CD4-positive, alpha-beta memory T cell (primary cell): ENCODE measurements at regions of chr20 and their contacts with region 1.

Region 1: GRCh38 chr20:52312132-52312729 is 120.7 kb upstream of the ZFP64 start:
- DNase-seq: peak; percentile 44 to 69 (median 64)
- H3K4me3 ChIP-seq: no peak overlapping the region
- H3K4me3 Mint-ChIP-seq: no peak overlapping the region
- H3K27ac ChIP-seq: no peak overlapping the region
- H3K27ac Mint-ChIP-seq: no peak overlapping the region
- H3K4me1 ChIP-seq: peaks cover 2% of the 10 kb centered on the region
- H3K4me1 Mint-ChIP-seq: peaks cover 5 to 26% (median 12%) of the 10 kb centered on the region in 4 donors
- H3K27me3 ChIP-seq: no peaks in the 10 kb centered on the region
- H3K27me3 Mint-ChIP-seq: no peaks in the 10 kb centered on the region

Region 2: DNA sequence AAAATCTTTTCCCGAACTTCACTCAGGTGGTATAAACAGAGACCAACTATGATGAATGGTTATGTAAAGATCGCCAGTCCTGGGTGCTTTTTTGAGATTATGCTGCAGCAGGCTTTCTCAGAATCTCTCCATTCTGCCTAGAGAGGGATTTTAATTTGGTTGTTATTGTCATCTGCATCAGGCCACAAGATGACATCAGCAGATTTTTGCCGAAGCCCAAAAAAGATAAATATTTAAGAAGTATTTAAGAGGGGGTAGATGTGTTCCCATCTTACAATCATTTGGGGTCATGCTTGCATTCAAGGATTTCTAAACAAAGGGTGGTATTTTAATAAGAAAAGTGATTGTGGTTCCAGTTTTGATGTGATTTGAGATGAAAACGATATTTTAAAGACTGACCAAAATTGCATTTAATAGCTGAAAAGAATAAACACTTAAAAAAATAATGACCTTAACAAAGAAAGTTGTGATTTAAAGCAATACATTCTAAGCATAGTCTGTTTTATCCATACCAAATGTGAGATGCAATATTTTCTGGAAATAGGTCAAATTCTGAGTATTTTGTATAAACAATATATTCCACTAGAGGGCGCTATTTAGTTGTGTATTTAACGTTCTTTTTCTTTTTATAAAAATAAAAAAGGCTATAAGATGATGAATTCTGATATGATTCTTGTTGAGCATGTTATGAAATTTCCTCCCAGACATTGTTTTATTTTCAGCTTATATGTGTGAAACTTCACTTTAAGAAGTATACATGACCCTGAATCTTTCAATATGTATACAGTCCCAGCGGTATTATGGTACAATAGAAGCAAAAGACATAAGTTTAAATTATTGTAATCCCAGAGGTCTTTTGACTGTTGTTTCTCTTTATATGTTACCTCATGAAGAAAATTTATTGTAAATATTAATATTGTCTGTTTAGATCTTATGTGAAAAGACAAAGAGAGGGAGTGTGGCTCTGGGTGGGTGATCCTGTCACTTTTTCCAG is 69.7 kb before region 1 on chr20:
- CTCF ChIA-PET with region 1: interaction called, 4 read pairs
- POLR2A ChIA-PET with region 1: no interaction called
- intact Hi-C with region 1: loop called (anchors 5 kb)
- DNase-seq: peak in 4 of 5 donors; percentile 29 to 39 (median 36)
- H3K4me3 ChIP-seq: no peak overlapping the region
- H3K4me3 Mint-ChIP-seq: no peak overlapping the region
- H3K27ac ChIP-seq: no peak overlapping the region
- H3K27ac Mint-ChIP-seq: no peak overlapping the region
- H3K4me1 ChIP-seq: no peaks in the 10 kb centered on the region
- H3K4me1 Mint-ChIP-seq: no peaks in the 10 kb centered on the region
- H3K27me3 ChIP-seq: no peaks in the 10 kb centered on the region
- H3K27me3 Mint-ChIP-seq: peaks cover 0 to 2% of the 10 kb centered on the region in 2 donors

Region 3: DNA sequence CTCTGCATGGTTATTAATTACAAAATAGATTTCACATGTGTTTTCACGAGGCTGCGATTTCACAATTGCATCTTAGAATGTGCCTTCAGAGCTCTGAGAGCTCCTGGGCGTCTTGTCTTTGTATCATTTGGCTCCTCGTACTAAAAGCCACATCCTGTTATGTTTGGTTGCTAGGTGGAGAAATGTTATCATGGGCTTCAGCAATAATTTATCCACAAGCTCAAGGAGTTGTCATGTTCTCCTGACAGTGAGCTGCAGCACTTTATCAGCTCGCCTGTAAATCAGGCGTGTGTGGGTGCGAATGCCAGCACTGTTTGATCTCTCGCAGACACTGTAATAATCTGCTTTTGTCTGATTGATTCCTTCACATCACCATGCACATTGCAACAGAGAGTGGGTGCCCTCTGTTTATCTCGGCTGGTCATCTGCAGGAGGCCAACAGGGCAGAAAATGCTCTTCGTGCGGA is 98.0 kb after region 1 on chr20:
- CTCF ChIA-PET with region 1: interaction called, 11 read pairs
- POLR2A ChIA-PET with region 1: interaction called, 8 read pairs
- intact Hi-C with region 1: loop called (anchors 1 kb)
- DNase-seq: peak; percentile 82 to 91 (median 86)
- H3K4me3 ChIP-seq: peak overlapping the region; percentile 1 to 37
- H3K4me3 Mint-ChIP-seq: peak overlapping the region; percentile 52 to 85 (median 80)
- H3K27ac ChIP-seq: peak overlapping the region; percentile 75
- H3K27ac Mint-ChIP-seq: peak overlapping the region; percentile 95 to 100 (median 99)
- H3K4me1 ChIP-seq: peaks cover 79% of the 10 kb centered on the region
- H3K4me1 Mint-ChIP-seq: peaks cover 55 to 88% (median 70%) of the 10 kb centered on the region in 4 donors
- H3K27me3 ChIP-seq: no peaks in the 10 kb centered on the region
- H3K27me3 Mint-ChIP-seq: no peaks in the 10 kb centered on the region

Region 4: DNA sequence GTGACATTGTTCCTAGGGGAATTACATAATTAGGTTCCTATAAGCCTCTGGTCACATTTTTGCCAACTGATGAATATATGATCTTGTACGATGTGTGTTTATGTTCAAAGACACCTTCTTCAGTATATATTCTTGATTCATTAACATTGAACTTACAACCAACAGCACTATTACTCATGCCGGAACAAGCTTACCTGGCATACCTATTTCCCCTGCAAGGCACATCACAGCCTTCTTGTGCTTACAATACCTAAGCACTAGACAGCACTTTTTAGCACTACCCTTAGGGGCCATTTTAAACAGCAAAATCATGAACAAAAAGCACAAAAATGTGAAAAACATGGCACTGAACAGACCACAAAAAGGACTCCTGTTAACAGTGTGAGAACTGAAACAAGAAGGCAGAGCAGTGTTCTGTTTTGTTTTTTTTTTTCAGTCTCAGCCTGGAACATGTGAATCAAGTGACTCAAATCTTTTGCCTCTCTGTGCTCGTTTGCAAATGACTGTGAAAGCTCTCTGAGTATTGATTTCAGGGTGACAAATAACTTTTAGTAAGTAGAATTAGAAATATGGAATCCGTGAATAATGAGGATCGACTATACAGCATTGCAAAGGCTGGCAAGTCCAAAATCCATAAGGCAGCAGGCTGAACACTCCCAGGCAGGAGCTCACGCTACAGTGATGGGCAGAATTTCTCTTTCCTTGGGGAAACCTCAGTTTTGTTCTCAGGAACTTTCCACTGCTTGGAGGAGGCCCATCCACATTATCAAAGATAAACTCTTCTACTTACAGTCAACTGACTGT is 557.7 kb after region 1 on chr20:
- CTCF ChIA-PET with region 1: no interaction called
- POLR2A ChIA-PET with region 1: no interaction called
- intact Hi-C with region 1: no loop called
- DNase-seq: no peak
- H3K4me3 ChIP-seq: no peak overlapping the region
- H3K4me3 Mint-ChIP-seq: no peak overlapping the region
- H3K27ac ChIP-seq: no peak overlapping the region
- H3K27ac Mint-ChIP-seq: no peak overlapping the region
- H3K4me1 ChIP-seq: no peaks in the 10 kb centered on the region
- H3K4me1 Mint-ChIP-seq: no peaks in the 10 kb centered on the region
- H3K27me3 ChIP-seq: no peaks in the 10 kb centered on the region
- H3K27me3 Mint-ChIP-seq: peaks cover 0 to 5% of the 10 kb centered on the region in 2 donors

Region 5: GRCh38 chr20:53001498-53002301 is 689.5 kb after region 1 on chr20:
- CTCF ChIA-PET with region 1: interaction called, 14 read pairs
- POLR2A ChIA-PET with region 1: interaction called, 4 read pairs
- intact Hi-C with region 1: no loop called
- DNase-seq: peak in 4 of 5 donors; percentile 30 to 52 (median 38)
- H3K4me3 ChIP-seq: peak overlapping the region; percentile 30 to 39
- H3K4me3 Mint-ChIP-seq: peak overlapping the region; percentile 74 to 92 (median 84)
- H3K27ac ChIP-seq: peak overlapping the region; percentile 41
- H3K27ac Mint-ChIP-seq: peak overlapping the region; percentile 87 to 98 (median 94)
- H3K4me1 ChIP-seq: peaks cover 42% of the 10 kb centered on the region
- H3K4me1 Mint-ChIP-seq: peaks cover 24 to 50% (median 44%) of the 10 kb centered on the region in 4 donors
- H3K27me3 ChIP-seq: no peaks in the 10 kb centered on the region
- H3K27me3 Mint-ChIP-seq: peaks cover 0 to 5% of the 10 kb centered on the region in 2 donors

Region 6: DNA sequence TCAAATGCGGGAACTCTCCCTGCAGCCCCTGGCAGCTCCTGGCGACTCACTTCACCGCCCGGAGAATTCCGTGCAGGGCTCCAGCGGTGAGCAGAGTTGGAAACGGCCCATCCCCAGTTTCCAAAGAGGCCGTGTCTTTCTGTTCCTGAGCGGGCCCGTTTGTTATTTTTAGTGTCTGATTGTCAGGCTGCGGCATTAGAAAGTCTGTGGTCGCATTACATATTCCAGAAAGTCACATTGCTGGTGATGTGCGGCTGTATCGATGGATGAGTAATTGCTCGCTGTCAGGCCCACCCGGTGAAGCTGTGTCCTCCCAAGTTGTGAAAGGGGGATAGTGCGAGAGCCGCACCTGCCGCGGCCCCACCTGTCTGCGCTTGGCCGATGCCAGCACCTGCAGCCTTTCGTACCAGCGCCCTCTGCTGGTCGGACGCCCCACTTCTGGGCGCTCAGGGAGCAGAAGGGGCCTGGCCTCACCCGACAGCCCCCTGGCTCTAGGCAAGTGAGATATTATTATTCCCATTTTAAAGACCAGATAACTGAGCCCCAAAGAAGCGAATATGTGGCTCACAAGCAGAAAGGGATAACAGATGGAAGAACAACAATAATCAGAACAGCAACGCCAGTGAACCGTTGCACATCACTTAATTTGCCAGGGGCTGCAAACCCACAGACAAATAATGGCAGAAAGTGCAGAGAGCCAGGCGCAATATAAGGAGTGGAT is 904.8 kb after region 1 on chr20:
- CTCF ChIA-PET with region 1: interaction called, 115 read pairs
- POLR2A ChIA-PET with region 1: interaction called, 7 read pairs
- intact Hi-C with region 1: loop called (anchors 1 kb)
- DNase-seq: peak; percentile 65 to 76 (median 69)
- H3K4me3 ChIP-seq: peak overlapping the region in 1 of 2 donors; percentile 15
- H3K4me3 Mint-ChIP-seq: peak overlapping the region; percentile 67 to 83 (median 74)
- H3K27ac ChIP-seq: no peak overlapping the region
- H3K27ac Mint-ChIP-seq: peak overlapping the region; percentile 36 to 88 (median 57)
- H3K4me1 ChIP-seq: peaks cover 31% of the 10 kb centered on the region
- H3K4me1 Mint-ChIP-seq: peaks cover 11 to 28% (median 23%) of the 10 kb centered on the region in 4 donors
- H3K27me3 ChIP-seq: no peaks in the 10 kb centered on the region
- H3K27me3 Mint-ChIP-seq: no peaks in the 10 kb centered on the region

Region 7: GRCh38 chr20:54199721-54200176 is 1887.5 kb after region 1 on chr20:
- CTCF ChIA-PET with region 1: interaction called, 4 read pairs
- POLR2A ChIA-PET with region 1: no interaction called
- intact Hi-C with region 1: loop called (anchors 5 kb)
- DNase-seq: peak; percentile 53 to 62 (median 57)
- H3K4me3 ChIP-seq: no peak overlapping the region
- H3K4me3 Mint-ChIP-seq: no peak overlapping the region
- H3K27ac ChIP-seq: no peak overlapping the region
- H3K27ac Mint-ChIP-seq: no peak overlapping the region
- H3K4me1 ChIP-seq: no peaks in the 10 kb centered on the region
- H3K4me1 Mint-ChIP-seq: peaks cover 0 to 5% (median 0%) of the 10 kb centered on the region in 4 donors
- H3K27me3 ChIP-seq: no peaks in the 10 kb centered on the region
- H3K27me3 Mint-ChIP-seq: peaks cover 0 to 2% of the 10 kb centered on the region in 2 donors